Uterus (tissue), 4 donors: ENCODE measurements at regions of chr11 and their contacts with region 1.

Region 1: GRCh38 chr11:11036848-11037732 is 179.2 kb upstream of the ZBED5 start:
- DNase-seq: peak in 1 of 2 donors; percentile 55
- H3K4me3 ChIP-seq: no peak overlapping the region
- H3K27ac ChIP-seq: peak overlapping the region; percentile 72 to 75
- H3K4me1 ChIP-seq: peaks cover 0 to 4% of the 10 kb centered on the region in 2 donors
- H3K27me3 ChIP-seq: no peaks in the 10 kb centered on the region
- CTCF ChIP-seq: peak; percentile 67 to 76 (median 70)
- POLR2A ChIP-seq: no peak

Region 2: DNA sequence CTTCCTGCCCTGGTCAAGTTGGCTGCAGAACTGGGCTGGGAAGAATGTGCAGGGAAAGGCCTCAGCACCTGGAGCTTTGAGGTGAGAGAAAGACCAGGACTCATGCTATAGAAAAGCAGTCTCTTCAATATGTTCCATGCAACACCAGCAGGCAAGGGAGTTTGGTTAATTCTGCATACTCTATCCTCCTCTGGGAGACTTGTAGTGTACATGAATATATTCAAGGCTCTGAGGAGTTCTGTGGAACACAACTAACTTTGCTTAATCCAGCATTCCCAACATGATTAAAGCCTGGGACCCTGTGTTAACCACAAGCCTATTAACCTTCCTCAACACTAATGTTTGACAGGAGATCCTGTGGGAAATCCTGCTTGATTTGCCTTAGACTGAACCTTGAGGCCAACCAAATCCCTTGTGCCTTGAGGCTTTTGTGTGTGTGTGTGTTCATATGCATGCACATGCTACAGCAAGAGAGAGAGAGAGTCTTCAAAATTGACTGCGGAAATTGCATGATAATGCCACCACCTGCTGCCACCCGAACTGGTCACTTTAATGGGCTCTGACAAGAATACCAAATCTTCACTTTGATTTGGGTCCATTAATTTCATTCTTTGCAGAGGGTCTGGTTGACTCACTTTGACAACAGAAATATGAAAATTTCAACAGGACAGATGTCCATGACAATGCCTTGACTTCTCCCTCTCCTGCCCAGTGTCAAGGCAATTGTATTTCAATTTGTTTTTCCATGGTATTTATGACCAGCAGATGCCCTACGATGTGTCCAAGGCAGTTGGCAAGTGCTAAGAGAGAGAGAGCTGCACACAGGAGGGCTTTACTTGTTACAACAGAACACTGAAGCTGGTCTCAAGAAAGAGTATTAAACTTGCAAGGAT is 59.0 kb after region 1 on chr11:
- intact Hi-C with region 1: no loop called
- DNase-seq: no peak
- H3K4me3 ChIP-seq: no peak overlapping the region
- H3K27ac ChIP-seq: no peak overlapping the region
- H3K4me1 ChIP-seq: no peaks in the 10 kb centered on the region
- H3K27me3 ChIP-seq: no peaks in the 10 kb centered on the region
- CTCF ChIP-seq: no peak
- POLR2A ChIP-seq: no peak

Region 3: DNA sequence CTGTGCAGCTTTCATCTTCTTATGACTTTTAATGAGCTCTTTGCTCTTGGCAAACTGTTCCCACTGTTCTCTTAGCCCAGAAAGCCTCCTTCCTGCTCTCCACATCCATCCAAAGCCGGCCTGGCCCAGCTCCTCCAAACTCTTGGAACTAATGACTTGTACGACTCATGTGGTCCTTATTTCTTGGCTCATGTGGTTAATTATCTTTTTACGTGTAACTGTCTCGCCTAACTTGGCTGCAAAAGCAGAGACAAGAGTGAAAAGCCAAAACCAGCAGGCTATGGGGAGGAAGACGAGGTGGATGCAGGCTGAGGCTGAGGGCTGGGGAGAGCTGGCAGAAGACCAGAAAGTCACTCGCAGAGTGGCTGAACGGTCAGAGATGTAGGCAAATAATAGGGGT is 310.5 kb after region 1 on chr11:
- intact Hi-C with region 1: no loop called
- DNase-seq: peak in 1 of 2 donors; percentile 34
- H3K4me3 ChIP-seq: no peak overlapping the region
- H3K27ac ChIP-seq: no peak overlapping the region
- H3K4me1 ChIP-seq: peaks cover 0 to 10% of the 10 kb centered on the region in 2 donors
- H3K27me3 ChIP-seq: no peaks in the 10 kb centered on the region
- CTCF ChIP-seq: no peak
- POLR2A ChIP-seq: no peak

Region 4: GRCh38 chr11:11787305-11788062 is 750.4 kb after region 1 on chr11:
- intact Hi-C with region 1: loop called (anchors 5 kb)
- DNase-seq: peak; percentile 78 to 82
- H3K4me3 ChIP-seq: no peak overlapping the region
- H3K27ac ChIP-seq: peak overlapping the region in 1 of 2 donors; percentile 10
- H3K4me1 ChIP-seq: no peaks in the 10 kb centered on the region
- H3K27me3 ChIP-seq: no peaks in the 10 kb centered on the region
- CTCF ChIP-seq: peak; percentile 86 to 94 (median 88)
- POLR2A ChIP-seq: no peak